Sigmoid colon (tissue), 7 donors: ENCODE measurements at regions of chr1 and their contacts with region 1.

Region 1: DNA sequence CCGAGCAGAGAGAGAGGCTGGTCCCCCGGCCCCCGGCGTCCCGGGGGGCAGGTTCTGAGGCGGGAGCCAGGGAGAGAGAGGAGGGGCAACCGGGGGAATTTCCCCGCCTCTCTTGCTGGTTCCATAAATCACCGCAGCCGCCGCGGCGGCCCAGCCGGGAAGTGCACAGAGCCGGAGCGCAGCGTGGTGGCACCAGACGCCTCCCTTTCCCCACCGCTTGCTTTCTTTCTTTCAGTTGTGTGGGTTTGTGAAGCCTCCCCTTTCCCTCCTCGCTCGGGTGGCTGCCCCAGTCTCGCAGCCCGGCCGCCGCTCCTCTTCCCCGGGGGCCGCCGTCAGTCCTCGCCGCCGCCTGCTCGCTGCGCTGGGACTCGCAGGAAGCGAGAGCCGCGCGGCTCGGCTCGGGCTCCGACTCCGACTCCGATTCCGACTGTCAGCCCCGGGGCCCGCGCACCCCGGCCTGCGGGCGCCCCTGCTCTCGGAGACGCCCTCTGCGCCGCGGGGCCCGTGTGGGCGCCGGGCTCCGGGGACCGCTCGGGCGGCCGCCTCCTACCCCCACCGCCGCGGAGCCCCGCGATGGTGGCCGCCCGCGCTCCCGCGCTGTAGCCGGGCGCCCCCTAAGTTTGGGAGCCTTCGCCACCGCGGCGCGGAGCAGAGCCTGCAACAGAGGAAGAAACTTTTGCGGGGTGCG is at the start of gene CACHD1:
- DNase-seq: peak; percentile 88
- H3K4me3 ChIP-seq: peak within 1 kb of the TSS; percentile 42 to 80 (median 67)
- H3K27ac ChIP-seq: peak within 1 kb of the TSS; percentile 78 to 84 (median 80)
- H3K4me1 ChIP-seq: peaks cover 0 to 30% (median 19%) of the 10 kb centered on the region in 4 donors
- H3K27me3 ChIP-seq: peaks cover 0 to 5% (median 0%) of the 10 kb centered on the region in 3 donors
- CTCF ChIP-seq: peak in 3 of 4 experiments; percentile 8 to 41 (median 33)
- EP300 ChIP-seq: no peak
- POLR2A ChIP-seq: no peak
- total RNA-seq, gene CACHD1: 3.7 to 7.1 (median 6.6) TPM

Region 2: DNA sequence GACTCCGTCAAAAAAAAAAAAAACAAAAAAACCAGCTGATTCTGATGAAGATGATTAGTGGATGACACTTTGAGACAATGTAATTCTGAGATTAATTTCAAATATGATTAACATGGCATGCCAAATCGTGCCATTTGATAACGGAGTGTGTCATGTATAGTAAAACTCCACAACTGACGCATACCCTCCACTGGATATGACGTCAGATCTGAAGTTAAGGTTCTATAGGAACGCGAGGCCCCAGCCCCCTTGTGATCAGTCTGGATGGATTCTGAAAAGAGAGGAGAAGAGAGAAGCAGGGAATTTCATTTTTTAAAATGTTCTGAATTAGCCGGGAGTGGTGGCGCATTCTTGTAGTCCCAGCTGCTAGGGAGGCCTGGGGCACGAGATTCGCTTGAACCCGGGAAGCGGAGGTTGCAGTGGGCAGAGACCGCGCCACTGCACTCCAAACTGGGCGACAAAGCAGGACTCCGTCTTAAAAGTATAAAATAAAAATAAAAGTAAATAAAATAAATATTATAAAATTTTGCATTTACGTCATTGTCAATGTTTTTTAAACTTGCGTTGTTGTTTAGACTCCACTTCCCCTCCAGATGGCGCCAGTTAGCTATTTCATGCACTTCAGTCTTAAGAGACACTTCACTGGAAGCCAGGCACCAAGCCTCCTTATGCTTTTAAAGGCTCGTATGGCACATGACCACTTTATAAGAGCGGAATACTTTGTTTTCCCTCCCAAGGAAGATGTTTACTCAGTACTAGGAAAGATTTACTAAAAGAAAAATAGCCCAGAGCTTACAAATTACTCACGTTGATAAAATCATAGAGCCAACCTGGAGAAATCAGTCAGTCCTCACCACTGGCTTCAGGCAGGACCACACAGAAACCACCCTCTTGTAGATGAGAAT is 201.2 kb before region 1 on chr1:
- intact Hi-C with region 1: loop called (anchors 10 kb)
- DNase-seq: peak; percentile 83
- H3K4me3 ChIP-seq: no peak overlapping the region
- H3K27ac ChIP-seq: no peak overlapping the region
- H3K4me1 ChIP-seq: peaks cover 0 to 19% (median 6%) of the 10 kb centered on the region in 4 donors
- H3K27me3 ChIP-seq: no peaks in the 10 kb centered on the region
- CTCF ChIP-seq: peak; percentile 47 to 74 (median 66)
- EP300 ChIP-seq: no peak
- POLR2A ChIP-seq: no peak

Region 3: GRCh38 chr1:64675718-64676345 is 205.7 kb after region 1 on chr1:
- intact Hi-C with region 1: loop called (anchors 10 kb)
- DNase-seq: no peak
- H3K4me3 ChIP-seq: no peak overlapping the region
- H3K27ac ChIP-seq: no peak overlapping the region
- H3K4me1 ChIP-seq: peaks cover 0 to 16% (median 11%) of the 10 kb centered on the region in 4 donors
- H3K27me3 ChIP-seq: no peaks in the 10 kb centered on the region
- CTCF ChIP-seq: peak in 1 of 4 experiments; percentile 62
- EP300 ChIP-seq: no peak
- POLR2A ChIP-seq: no peak

Region 4: DNA sequence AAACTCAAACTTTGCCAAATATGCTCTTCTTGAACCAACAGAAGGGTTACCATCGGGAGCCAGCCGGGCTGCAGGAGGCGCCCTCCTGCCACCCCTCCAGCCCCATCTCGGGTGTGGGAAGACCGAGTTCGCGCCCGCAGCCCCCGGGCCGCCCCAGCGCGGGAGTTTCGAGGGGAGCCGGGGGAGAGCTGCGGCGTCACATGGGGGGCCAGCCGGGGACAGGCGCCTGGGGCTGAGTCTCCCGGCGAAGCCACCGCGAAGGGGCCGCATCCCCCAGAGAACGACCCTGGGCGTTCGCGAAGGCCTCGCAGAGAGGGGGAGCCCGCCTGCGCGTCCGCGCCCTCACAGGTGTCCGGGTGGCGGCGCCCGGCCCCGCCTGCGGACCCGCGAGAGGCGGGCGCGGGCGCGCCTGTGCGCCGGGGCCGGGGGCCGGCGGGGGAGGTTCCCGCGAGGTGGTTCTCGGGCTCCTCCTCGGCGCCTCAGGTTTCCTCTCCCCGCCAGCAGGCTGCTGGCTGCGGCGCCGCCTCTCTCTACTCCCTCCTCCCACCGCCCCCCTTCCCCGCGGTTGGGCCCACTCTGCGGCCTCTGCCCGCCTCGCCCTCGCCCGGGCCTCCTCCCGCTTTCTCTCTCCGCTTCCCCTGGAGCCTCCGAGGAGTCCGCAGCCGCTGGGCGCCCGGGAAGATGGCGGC is 274.5 kb after region 1 on chr1 and contains the start of gene RAVER2:
- intact Hi-C with region 1: loop called (anchors 5 kb)
- DNase-seq: peak; percentile 87
- H3K4me3 ChIP-seq: peak within 1 kb of the TSS; percentile 74 to 91 (median 82)
- H3K27ac ChIP-seq: peak within 1 kb of the TSS; percentile 83 to 91 (median 90)
- H3K4me1 ChIP-seq: peaks cover 0 to 34% (median 24%) of the 10 kb centered on the region in 4 donors
- H3K27me3 ChIP-seq: no peaks in the 10 kb centered on the region
- CTCF ChIP-seq: peak in 2 of 4 experiments; percentile 20 to 46
- EP300 ChIP-seq: no peak
- POLR2A ChIP-seq: no peak
- total RNA-seq, gene RAVER2: 12.7 to 22.2 (median 17.4) TPM

Region 5: GRCh38 chr1:64823691-64824476 is 353.8 kb after region 1 on chr1:
- intact Hi-C with region 1: loop called (anchors 10 kb)
- DNase-seq: no peak
- H3K4me3 ChIP-seq: no peak overlapping the region
- H3K27ac ChIP-seq: no peak overlapping the region
- H3K4me1 ChIP-seq: peaks cover 0 to 7% (median 2%) of the 10 kb centered on the region in 4 donors
- H3K27me3 ChIP-seq: no peaks in the 10 kb centered on the region
- CTCF ChIP-seq: peak; percentile 68 to 83 (median 76)
- EP300 ChIP-seq: no peak
- POLR2A ChIP-seq: no peak